Mucosa of descending colon (tissue), 3 donors: ENCODE measurements at regions of chr17 and their contacts with region 1.

Region 1: GRCh38 chr17:40417609-40418427 is at the start of gene TOP2A:
- DNase-seq: peak; percentile 90 to 99 (median 96)
- ATAC-seq: peak; percentile 99
- H3K4me3 ChIP-seq: peak within 1 kb of the TSS; percentile 25
- H3K4me1 ChIP-seq: peaks cover 4% of the 10 kb centered on the region
- CTCF ChIP-seq: no peak
- total RNA-seq, gene TOP2A: 6.9 to 50.1 (median 11.4) TPM

Region 2: DNA sequence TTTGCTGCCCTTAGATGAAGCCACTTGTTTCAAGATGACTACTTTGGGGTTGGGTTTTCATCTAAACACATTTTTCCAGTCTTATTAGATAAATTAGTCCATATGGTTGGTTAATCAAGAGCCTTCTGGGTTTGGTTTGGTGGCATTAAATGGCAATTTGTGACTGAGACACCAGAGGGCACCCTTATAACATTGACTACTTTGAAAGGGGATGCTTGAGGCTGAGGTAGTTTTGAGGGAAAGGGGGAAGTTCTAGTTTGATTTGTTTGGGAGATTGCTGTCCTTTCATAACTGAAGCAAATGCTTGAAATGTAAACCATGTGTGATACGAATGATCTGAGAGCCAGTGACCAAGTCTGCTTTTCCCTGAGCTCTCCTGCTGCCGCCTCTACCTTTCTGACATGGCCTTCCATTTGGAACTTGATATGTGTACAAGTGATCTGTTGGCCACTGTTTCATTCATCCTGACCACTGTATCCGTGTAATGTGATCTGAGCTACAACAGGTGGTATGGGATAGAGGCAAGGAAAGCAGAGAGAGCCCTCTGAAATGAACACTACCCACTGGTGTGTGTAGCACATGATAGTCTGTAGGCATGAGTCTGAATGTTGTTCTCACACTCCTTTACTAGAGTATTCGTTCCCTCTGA is 114.7 kb before region 1 on chr17:
- intact Hi-C with region 1: loop called in 1 of 2 experiments (anchors 10 kb)
- DNase-seq: peak in 1 of 3 donors; percentile 85
- ATAC-seq: peak; percentile 62
- H3K4me3 ChIP-seq: no peak overlapping the region
- H3K4me1 ChIP-seq: peaks cover 20% of the 10 kb centered on the region
- CTCF ChIP-seq: peak; percentile 43